Endothelial cell of umbilical vein (primary cell): ENCODE measurements at regions of chr22 and their contacts with region 1.

Region 1: GRCh38 chr22:21816787-21817496 is 50.5 kb downstream of the MAPK1 start:
- DNase-seq: peak; percentile 95
- H3K4me3 ChIP-seq: peak overlapping the region in 1 of 3 experiments; percentile 29
- H3K27ac ChIP-seq: peak overlapping the region; percentile 96
- H3K4me1 ChIP-seq: peaks cover 32% of the 10 kb centered on the region
- H3K27me3 ChIP-seq: no peaks in the 10 kb centered on the region
- CTCF ChIP-seq: no peak
- POLR2A ChIP-seq: no peak

Region 2: DNA sequence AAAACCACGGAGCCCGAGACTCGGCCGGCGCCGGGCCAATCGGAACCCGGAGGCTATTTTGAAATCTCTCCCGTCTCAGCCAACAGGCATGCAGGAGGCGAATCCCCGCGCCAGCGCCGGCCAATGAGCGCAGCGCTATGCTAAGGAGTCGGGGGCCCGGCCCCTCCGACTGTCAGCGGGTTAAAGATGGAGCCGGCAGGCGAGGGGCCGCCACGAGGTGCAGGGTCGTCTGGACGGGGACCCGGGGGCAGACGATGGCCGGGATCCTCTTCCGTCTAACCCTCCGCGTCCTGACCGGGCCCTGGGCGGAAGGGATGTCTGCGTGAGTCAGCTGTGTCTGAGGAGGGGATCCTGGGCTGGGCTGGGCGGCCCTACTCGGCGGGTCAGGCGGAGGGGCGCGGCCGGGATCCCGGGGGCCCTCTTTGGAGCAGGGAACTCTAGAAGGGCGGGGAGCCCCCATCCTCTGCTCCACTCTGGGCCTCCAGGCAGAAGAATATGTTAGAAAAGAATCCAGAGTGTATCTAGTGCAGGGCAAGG is 164.9 kb before region 1 on chr22:
- CTCF ChIA-PET with region 1: no interaction called
- POLR2A ChIA-PET with region 1: no interaction called
- dilution Hi-C with region 1: no loop called
- intact Hi-C with region 1: loop called (anchors 10 kb)
- DNase-seq: peak; percentile 92
- H3K4me3 ChIP-seq: peak overlapping the region; percentile 64 to 85 (median 66)
- H3K27ac ChIP-seq: peak overlapping the region; percentile 61
- H3K4me1 ChIP-seq: peaks cover 17% of the 10 kb centered on the region
- H3K27me3 ChIP-seq: no peaks in the 10 kb centered on the region
- CTCF ChIP-seq: no peak
- POLR2A ChIP-seq: peak; percentile 66

Region 3: DNA sequence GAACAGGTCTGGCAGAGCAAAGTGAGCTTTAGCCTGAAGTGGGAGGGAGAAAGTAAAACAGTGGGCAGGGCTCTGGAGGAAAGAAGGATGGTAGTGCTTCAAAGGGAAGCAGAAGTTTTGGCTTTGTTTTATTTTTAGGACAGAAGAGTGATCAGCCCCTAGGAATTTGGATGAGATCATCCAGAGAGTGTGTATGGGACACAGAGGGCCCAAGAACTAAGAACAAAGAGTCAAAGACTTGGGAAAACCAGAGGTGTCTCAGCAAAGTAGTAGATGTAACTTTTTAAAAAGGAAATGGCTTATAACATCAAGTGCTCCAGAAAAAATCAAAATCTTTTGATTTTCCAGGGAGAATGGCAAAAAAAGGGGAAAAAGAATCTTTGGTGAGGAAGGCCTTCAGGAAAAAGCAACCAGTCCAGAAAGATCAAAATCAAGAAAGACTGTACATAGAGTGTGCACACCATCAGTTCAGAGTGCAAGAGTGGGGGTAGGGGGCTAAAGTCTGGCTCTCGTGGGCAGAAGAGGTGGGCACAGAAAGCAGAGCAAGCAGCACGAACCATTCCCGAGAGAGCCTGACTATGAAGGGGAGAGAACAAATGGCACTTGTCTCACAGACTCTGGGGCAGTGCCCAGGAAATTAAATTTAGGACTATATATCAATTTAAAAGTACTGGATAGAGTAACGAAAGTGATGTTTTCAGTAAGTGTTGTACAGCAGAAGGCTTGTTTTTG is 20.5 kb after region 1 on chr22:
- CTCF ChIA-PET with region 1: interaction called, 3 read pairs
- POLR2A ChIA-PET with region 1: interaction called, 3 read pairs
- dilution Hi-C with region 1: no loop called
- intact Hi-C with region 1: loop called (anchors 1 kb)
- DNase-seq: peak; percentile 72
- H3K4me3 ChIP-seq: peak overlapping the region in 1 of 3 experiments; percentile 10
- H3K27ac ChIP-seq: peak overlapping the region; percentile 98
- H3K4me1 ChIP-seq: peaks cover 13% of the 10 kb centered on the region
- H3K27me3 ChIP-seq: no peaks in the 10 kb centered on the region
- CTCF ChIP-seq: no peak
- POLR2A ChIP-seq: no peak

Region 4: DNA sequence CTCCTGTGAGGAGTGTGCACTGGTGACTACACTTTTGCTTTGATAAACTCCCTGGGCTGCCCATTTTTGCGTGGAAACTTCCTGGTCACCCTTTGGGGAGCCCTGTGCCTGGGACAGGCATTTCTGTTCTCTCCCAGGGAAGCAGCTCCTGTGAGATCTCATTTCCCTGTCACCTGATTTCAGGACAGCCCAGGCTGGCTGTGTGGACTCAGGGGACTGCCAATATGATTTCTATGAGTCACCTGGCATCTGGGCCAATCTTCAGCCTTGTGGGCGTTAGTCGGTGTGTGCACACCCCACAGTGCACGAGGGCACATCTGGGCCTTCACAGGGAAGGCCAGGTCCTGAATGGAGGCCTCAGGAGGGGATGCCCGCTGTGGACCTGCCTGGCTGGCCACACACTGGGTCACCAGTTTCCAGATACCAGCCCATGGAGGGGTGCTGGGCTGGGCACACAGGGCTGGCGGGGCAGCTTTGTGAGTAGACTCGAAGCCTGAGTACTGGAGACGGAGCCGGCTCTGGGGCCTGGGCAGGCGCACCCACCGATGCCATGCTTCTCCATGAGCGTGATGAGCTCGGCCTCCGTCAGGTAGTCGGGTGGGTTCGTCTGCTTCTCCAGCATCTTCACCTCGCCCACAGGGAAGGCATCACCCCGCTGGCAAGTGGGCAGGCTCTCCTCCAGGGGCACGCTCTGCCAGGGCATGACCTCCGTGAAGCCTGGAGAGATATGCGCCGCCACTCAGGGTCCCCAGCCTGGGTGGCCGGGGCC is 145.1 kb after region 1 on chr22:
- CTCF ChIA-PET with region 1: no interaction called
- POLR2A ChIA-PET with region 1: no interaction called
- dilution Hi-C with region 1: no loop called
- intact Hi-C with region 1: no loop called
- DNase-seq: no peak
- H3K4me3 ChIP-seq: no peak overlapping the region
- H3K27ac ChIP-seq: no peak overlapping the region
- H3K4me1 ChIP-seq: no peaks in the 10 kb centered on the region
- H3K27me3 ChIP-seq: no peaks in the 10 kb centered on the region
- CTCF ChIP-seq: no peak
- POLR2A ChIP-seq: no peak